PC-3 (cell line): ENCODE measurements at regions of chr1 and their contacts with region 1.

Region 1: DNA sequence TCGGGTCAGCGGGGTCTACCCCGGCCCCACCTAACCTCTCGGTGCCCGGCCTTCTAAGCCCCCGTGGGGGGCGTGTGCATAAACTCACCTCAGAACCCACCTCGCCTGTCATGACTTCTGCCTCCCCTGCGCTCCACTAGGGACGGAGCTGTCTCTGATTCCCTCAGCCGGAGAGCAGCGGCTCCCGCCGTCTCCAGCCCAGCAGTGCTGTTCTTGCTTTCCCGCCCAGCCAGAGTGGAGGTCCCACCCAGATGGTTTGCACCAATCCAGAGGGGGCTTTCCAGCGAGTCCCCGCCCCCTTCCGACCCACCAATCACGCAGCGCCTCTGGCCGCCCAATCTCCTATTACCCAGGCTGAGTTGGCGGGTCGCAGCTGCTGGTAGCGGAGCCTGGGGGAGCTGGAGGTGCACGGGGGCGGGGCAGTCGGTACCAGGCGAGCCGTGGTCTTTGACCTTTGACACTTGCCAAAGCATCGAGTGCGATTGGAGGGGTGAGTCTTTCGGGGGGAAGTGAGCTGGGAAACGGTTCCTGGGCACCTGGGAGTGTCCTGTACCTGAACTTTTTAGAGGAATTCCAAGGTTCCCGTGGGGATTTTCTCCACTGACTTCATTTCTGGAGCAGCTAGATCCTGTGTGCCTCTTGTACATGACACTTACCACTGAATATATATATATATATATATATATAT is at the start of gene CLSPN:
- DNase-seq: peak; percentile 94
- ATAC-seq: peak; percentile 94
- H3K4me3 ChIP-seq: peak within 1 kb of the TSS; percentile 100
- H3K27ac ChIP-seq: peak within 1 kb of the TSS; percentile 54
- H3K4me1 ChIP-seq: no peaks in the 10 kb centered on the region; the same call in 1 of the 2 replicates
- H3K27me3 ChIP-seq: no peaks in the 10 kb centered on the region
- CTCF ChIP-seq: no peak
- total RNA-seq, gene CLSPN: 21.5 and 29.5 TPM in 2 replicates

Region 2: DNA sequence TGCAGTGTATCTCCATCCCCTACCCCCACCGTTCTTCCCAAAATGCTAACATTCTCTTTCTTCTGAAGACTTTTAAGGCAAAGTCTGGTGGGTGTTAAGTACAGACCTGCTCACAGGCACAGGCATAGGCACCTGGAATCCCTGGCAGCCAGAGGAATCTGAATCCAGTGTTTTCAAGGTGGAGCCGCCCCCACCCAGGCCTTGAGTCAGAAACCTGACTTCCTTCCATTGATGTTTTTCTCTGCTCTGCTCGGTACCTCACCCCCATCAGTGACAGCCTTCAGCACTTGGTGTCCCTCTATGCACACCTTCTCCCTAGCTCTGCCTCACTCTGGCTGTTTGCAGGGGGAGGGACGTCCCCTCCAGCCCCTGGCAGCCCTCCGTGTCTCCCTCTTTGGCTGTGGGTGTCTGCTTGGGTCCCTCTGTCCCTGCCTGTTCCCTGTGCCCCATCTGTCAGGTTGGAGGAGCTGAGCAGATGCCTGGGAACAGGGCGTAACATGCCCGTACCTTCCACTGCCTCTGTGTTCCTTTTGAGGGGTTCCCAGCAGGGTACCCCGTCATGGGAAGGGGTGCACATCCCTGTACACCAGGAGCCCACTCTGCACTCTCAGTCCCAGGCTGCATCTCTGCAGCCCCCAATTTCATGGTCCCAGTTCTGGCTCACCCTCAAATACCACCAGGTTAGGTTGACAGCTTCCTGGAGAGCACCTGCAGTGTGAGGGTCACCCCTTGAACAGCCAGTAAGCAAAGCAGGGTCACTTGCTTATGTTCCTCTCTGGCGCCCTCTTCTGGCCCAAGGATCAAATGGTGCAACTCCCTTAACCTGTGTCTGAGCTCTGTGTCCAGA is 205.6 kb before region 1 on chr1:
- CTCF ChIA-PET with region 1: no interaction called
- POLR2A ChIA-PET with region 1: no interaction called
- intact Hi-C with region 1: loop called (anchors 1 kb)
- DNase-seq: peak; percentile 81
- ATAC-seq: peak; percentile 62
- H3K4me3 ChIP-seq: no peak overlapping the region
- H3K27ac ChIP-seq: no peak overlapping the region
- H3K4me1 ChIP-seq: peaks cover 7% of the 10 kb centered on the region
- H3K27me3 ChIP-seq: no peaks in the 10 kb centered on the region
- CTCF ChIP-seq: peak; percentile 83

Region 3: GRCh38 chr1:35641233-35641866 is 128.6 kb before region 1 on chr1 and contains the start of gene PSMB2:
- CTCF ChIA-PET with region 1: no interaction called
- POLR2A ChIA-PET with region 1: no interaction called
- intact Hi-C with region 1: loop called (anchors 5 kb)
- DNase-seq: peak; percentile 98
- ATAC-seq: peak; percentile 86
- H3K4me3 ChIP-seq: peak within 1 kb of the TSS; percentile 95
- H3K27ac ChIP-seq: peak within 1 kb of the TSS; percentile 79
- H3K4me1 ChIP-seq: peaks cover 22% of the 10 kb centered on the region
- H3K27me3 ChIP-seq: no peaks in the 10 kb centered on the region
- CTCF ChIP-seq: no peak
- total RNA-seq, gene PSMB2: 61.2 and 88.7 TPM in 2 replicates

Region 4: DNA sequence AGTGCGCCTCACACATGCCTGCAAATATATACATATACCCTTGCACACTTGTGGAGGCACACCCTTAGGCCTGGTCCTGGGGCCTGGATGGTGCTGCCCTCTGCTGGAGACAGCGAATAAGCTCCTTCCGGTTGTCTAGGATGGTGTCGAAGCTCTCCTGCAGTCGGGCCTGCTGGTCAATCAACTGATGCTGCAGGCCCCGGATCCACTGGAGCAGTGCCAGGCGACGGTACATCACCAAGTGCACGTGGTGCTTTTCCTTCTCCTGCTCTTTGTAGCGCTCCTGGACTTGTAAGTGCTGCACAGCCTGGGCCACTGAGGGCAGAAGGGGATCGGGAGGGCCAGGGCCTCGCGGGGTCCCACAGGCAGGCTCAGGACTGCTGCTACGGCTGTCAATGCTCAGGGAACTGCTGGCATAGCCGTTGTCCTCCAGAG is 54.3 kb before region 1 on chr1:
- CTCF ChIA-PET with region 1: no interaction called
- POLR2A ChIA-PET with region 1: no interaction called
- intact Hi-C with region 1: loop called (anchors 2 kb)
- DNase-seq: peak; percentile 79
- ATAC-seq: peak; percentile 47
- H3K4me3 ChIP-seq: no peak overlapping the region
- H3K27ac ChIP-seq: no peak overlapping the region
- H3K4me1 ChIP-seq: peaks cover 23% of the 10 kb centered on the region
- H3K27me3 ChIP-seq: no peaks in the 10 kb centered on the region
- CTCF ChIP-seq: peak; percentile 92

Region 5: DNA sequence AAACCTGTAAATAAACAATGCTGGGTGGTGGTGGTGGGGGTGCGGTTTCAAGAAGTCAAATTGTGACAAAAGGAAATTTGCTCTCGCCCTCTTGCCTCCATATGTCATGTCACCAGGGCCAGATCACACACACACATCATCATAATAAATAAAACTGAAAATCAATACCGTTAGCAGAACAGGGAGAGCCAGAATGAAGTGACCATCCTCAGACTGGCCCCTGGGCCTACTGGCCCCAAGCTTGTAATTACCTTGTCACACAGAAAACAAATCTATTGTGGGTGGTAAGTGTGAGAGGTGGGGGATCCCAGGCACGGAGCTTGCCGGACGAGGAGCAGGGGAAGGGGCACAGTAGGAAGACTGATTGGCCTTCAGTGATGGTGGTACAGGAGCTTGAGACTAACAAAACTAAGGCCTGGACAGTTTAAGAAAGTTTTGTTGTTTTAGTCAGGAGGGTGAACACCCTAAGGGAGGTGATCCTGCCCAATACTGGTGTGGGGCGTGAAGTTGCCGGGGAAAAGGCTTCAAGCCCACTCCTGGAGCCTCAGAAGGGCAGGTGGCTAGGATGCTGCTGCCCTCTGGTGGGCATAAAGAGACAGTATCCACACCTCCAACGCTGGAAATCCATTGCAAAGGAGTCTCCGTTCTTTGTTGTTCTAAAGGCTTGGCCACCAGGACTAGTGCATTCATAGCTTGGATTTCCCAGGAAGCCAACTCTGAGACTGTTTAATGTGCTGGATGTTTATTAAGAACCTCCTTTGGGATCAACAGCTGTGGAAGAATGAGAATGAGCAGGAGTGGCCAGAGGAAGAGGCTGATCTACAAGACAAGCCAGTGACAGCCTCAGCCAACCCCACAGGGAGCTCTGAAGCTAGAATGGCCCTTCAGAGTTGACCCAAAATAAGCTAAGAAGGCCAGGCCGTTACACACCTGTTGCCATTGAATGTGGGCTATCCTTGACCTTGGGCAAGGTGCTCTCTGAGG is 43.2 kb before region 1 on chr1:
- CTCF ChIA-PET with region 1: interaction called, 5 read pairs
- POLR2A ChIA-PET with region 1: interaction called, 3 read pairs
- intact Hi-C with region 1: loop called (anchors 2 kb)
- DNase-seq: peak; percentile 61
- ATAC-seq: peak; percentile 97
- H3K4me3 ChIP-seq: no peak overlapping the region
- H3K27ac ChIP-seq: no peak overlapping the region
- H3K4me1 ChIP-seq: no peaks in the 10 kb centered on the region
- H3K27me3 ChIP-seq: no peaks in the 10 kb centered on the region
- CTCF ChIP-seq: peak; percentile 90

Region 6: DNA sequence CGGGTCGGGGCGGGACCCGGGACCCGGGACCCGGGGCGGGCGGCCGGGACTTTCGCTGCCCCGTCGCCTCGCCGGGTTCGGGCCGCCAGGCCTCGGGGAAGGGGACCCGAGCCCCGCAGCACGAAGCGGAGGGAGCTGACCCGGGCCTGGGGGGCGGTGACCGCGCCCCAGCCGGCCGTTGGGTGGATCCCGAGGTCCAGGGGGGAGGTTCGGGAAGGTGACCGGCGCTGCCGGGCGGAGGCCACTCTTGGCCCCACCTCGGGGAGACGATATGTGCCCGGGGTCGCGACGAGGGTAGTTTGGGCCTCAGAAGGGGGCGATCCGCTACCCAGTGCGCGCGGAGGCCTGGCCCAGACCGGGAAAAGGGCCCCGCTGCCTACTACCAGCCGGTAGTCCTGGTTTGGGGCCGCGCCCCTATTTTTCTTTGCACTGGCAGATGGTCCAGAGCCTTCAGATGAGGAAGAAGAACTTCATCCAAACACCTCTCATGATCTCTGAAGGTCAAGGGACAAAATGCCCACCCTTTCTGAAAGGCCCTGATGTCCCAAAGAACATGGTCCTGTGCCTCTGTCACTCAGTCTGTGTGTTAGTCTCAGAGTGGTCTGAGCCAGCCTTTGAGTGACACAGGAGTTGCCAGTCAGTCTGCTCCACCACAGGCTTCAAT is 38.7 kb after region 1 on chr1:
- CTCF ChIA-PET with region 1: no interaction called
- POLR2A ChIA-PET with region 1: no interaction called
- intact Hi-C with region 1: loop called (anchors 1 kb)
- DNase-seq: peak; percentile 32
- ATAC-seq: peak; percentile 69
- H3K4me3 ChIP-seq: peak overlapping the region; percentile 96
- H3K27ac ChIP-seq: peak overlapping the region; percentile 25
- H3K4me1 ChIP-seq: peaks cover 23% of the 10 kb centered on the region
- H3K27me3 ChIP-seq: no peaks in the 10 kb centered on the region
- CTCF ChIP-seq: no peak

Region 7: GRCh38 chr1:35935442-35936388 is 165.8 kb after region 1 on chr1:
- CTCF ChIA-PET with region 1: no interaction called
- POLR2A ChIA-PET with region 1: no interaction called
- intact Hi-C with region 1: no loop called
- DNase-seq: no peak
- ATAC-seq: no peak
- H3K4me3 ChIP-seq: no peak overlapping the region
- H3K27ac ChIP-seq: no peak overlapping the region
- H3K4me1 ChIP-seq: peaks cover 18% of the 10 kb centered on the region
- H3K27me3 ChIP-seq: no peaks in the 10 kb centered on the region
- CTCF ChIP-seq: no peak